ENCODE measurements at regions of chr15 and their contacts with region 1.

Region 1: GRCh38 chr15:99733268-99734039 is at the start of gene LYSMD4:
- DNase-seq: peak; percentile 59
- H3K4me3 ChIP-seq: peak within 1 kb of the TSS; percentile 85
- H3K27me3 ChIP-seq: peaks cover 2% of the 10 kb centered on the region; the same call in 1 of the 2 replicates
- CTCF ChIP-seq: no peak
- polyA plus RNA-seq, gene LYSMD4: 2.1 and 2.7 TPM in 2 replicates

Region 2: GRCh38 chr15:99566157-99566897 is 167.1 kb before region 1 on chr15:
- CTCF ChIA-PET with region 1: no interaction called
- POLR2A ChIA-PET with region 1: interaction called, 10 read pairs
- DNase-seq: no peak
- H3K4me3 ChIP-seq: peak overlapping the region; percentile 49
- H3K27me3 ChIP-seq: peaks cover 2% of the 10 kb centered on the region; the same call in 1 of the 2 replicates
- CTCF ChIP-seq: no peak

Region 3: GRCh38 chr15:99719096-99719541 is 14.3 kb before region 1 on chr15:
- CTCF ChIA-PET with region 1: interaction called, 19 read pairs
- POLR2A ChIA-PET with region 1: interaction called, 3 read pairs
- DNase-seq: no peak
- H3K4me3 ChIP-seq: no peak overlapping the region
- H3K27me3 ChIP-seq: no peaks in the 10 kb centered on the region
- CTCF ChIP-seq: no peak

Region 4: DNA sequence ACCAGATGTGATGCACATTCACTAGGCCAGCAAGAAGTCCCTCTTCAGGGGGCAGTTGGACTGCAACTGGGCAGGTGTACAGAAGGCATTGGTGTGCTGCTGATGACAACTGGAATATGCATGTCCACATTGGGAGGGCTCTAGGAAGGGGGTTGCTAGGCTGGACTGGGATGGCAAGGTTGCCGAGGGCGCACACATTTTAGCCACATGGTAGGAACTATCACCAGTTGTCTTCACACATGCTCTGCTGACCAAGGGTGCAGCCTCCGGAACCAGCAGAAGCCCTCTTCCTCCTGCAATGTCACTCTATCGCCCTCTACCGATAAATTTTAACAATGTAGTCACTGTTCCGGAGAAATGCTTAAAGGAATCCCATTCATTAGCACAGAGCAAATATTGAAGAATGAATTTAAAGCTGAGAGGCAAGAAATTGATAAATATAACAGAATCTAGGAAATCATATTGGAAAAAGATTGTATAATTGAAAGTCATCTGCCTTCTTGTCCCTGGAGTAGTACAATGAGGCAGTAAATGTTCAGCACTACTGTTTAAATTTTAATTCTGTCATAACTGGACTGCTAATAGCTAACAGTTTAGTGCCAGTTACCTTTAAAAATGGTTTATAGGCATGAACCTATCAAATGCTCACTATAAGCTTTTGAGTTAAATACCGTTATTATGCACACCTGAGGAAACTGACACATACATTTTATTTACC is 22.4 kb after region 1 on chr15:
- CTCF ChIA-PET with region 1: interaction called, 12 read pairs
- POLR2A ChIA-PET with region 1: interaction called, 5 read pairs
- DNase-seq: no peak
- H3K4me3 ChIP-seq: no peak overlapping the region
- H3K27me3 ChIP-seq: no peaks in the 10 kb centered on the region
- CTCF ChIP-seq: peak; percentile 84

Region 5: DNA sequence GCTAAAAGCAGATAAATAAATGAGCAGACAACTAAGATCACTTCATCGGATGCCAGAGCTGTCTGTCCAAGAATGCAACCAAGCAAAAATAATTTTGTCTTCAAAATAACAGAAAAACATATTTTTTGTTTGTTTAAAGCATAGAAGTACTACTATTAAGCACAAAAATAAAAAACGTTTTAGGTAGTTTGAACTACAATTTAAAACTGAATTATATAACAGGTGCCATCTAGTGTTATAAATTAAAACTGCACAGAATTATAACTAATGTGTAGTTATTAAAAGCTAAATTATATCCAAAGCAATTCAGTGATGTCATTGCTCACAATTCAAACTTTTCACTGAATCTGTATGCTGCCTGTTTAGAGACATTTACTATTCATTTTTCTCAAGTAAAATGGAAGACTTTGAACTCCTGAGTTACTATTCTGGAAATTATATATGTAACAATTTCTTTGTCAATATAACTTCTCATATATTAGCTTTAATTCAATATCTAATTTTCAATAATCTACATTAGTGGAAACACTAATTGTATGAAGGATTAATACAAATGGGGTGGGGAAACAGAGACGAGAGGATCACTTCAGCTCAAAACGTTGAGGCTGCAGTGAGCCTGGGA is 839.0 kb after region 1 on chr15:
- CTCF ChIA-PET with region 1: no interaction called
- POLR2A ChIA-PET with region 1: interaction called, 10 read pairs
- DNase-seq: no peak
- H3K4me3 ChIP-seq: no peak overlapping the region
- H3K27me3 ChIP-seq: no peaks in the 10 kb centered on the region
- CTCF ChIP-seq: no peak